ENCODE measurements at regions of chr1 and their contacts with region 1.

Region 1: DNA sequence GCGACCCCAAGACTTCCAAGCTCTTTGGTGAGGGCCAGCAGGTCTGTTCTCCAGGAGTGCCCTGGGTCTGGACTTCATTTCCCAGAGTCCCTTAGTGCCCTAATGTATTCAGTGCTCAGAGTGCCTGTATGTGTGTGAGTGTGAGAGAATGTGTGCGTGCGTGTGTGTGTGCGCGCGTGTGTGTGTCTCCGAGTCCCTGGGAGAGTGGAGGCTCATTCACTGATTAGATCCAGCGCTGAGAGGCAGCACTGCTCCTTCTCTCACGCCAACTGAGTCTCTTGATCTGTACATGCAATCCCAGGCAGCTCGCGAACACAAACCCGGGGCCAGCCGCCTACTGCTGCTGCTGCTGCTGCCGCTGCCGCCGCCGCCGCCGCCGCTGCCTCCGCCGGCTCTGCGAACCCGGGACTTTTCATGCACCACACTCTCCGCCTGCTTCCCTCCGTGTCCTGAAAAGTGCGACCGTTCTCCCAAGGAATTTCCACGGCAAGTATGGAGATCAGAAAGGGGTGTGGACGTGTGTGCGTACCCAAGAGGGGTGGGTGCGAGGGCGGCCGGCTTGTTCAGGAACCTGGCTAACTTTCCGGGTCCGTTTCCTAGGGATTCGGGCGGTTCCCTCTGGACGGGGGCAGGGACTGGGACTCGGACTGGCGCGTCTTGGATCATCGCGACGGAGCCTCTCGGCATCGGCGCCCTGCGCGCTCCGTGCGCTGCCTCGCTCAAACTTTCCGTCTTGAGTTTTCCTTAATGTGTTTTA is at the start of gene RNF220:
- DNase-seq: peak; percentile 80 to 98 (median 88)

Region 2: GRCh38 chr1:44417351-44418021 is 12.3 kb after region 1 on chr1:
- intact Hi-C with region 1: loop called (anchors 1 kb)
- DNase-seq: peak; percentile 62 to 95 (median 67)

Region 3: GRCh38 chr1:44500181-44501046 is 95.2 kb after region 1 on chr1:
- intact Hi-C with region 1: loop called (anchors 5 kb)
- DNase-seq: peak in 6 of 10 donors; percentile 48 to 93 (median 68)

Region 4: GRCh38 chr1:44594871-44595746 is 189.9 kb after region 1 on chr1:
- intact Hi-C with region 1: loop called (anchors 5 kb)
- DNase-seq: peak; percentile 63 to 97 (median 89)

Region 5: GRCh38 chr1:44645476-44646244 is 240.4 kb after region 1 on chr1:
- intact Hi-C with region 1: loop called (anchors 10 kb)
- DNase-seq: peak; percentile 79 to 99 (median 89)

Region 6: GRCh38 chr1:44674113-44675000 is 269.1 kb after region 1 on chr1 and contains the starts of genes ARMH1 and TMEM53:
- intact Hi-C with region 1: no loop called
- DNase-seq: peak; percentile 96 to 100 (median 99)

Region 7: GRCh38 chr1:45254490-45254889 is 849.3 kb after region 1 on chr1:
- intact Hi-C with region 1: no loop called
- DNase-seq: no peak